ENCODE measurements at regions of chr1 and their contacts with region 1.

Region 1: GRCh38 chr1:9428601-9429341 is 110.5 kb upstream of the SLC25A33 start:
- DNase-seq: peak; percentile 100
- ATAC-seq: peak; percentile 74
- H3K4me3 ChIP-seq: peak overlapping the region; percentile 58 to 91 (median 77)
- H3K4me3 Mint-ChIP-seq: peak overlapping the region; percentile 99
- H3K27ac ChIP-seq: peak overlapping the region; percentile 74 to 85
- H3K27ac Mint-ChIP-seq: peak overlapping the region; percentile 98
- H3K4me1 ChIP-seq: peaks cover 48 to 56% of the 10 kb centered on the region in 2 donors
- H3K4me1 Mint-ChIP-seq: peaks cover 54% of the 10 kb centered on the region
- H3K27me3 ChIP-seq: no peaks in the 10 kb centered on the region
- H3K27me3 Mint-ChIP-seq: no peaks in the 10 kb centered on the region
- CTCF ChIP-seq: peak; percentile 19

Region 2: GRCh38 chr1:9350013-9350908 is 78.5 kb before region 1 on chr1:
- CTCF ChIA-PET with region 1: no interaction called
- POLR2A ChIA-PET with region 1: no interaction called
- intact Hi-C with region 1: no loop called
- DNase-seq: no peak
- ATAC-seq: no peak
- H3K4me3 ChIP-seq: no peak overlapping the region
- H3K4me3 Mint-ChIP-seq: no peak overlapping the region
- H3K27ac ChIP-seq: no peak overlapping the region
- H3K27ac Mint-ChIP-seq: no peak overlapping the region
- H3K4me1 ChIP-seq: no peaks in the 10 kb centered on the region
- H3K4me1 Mint-ChIP-seq: peaks cover 11% of the 10 kb centered on the region
- H3K27me3 ChIP-seq: no peaks in the 10 kb centered on the region
- H3K27me3 Mint-ChIP-seq: no peaks in the 10 kb centered on the region
- CTCF ChIP-seq: no peak

Region 3: DNA sequence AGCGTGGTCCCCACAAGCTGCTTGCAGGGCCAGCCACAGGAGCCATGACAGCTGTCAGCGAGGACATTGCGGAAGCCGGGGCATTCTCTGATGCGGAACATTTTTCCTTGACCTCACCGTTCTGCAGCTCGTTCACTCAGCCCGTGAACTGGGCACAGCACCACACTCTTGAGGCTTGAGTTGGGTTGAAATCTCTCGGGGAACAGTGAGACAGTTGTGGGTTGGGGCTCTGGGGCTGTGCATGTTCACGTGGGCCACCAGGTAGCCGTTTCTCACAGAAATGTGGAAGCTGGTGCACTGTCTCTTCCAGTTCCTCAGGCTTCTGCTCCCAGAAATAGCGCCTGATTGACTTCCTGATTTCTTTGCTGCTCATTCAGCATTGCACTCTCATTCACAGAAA is 66.3 kb before region 1 on chr1:
- CTCF ChIA-PET with region 1: interaction called, 3 read pairs
- POLR2A ChIA-PET with region 1: no interaction called
- intact Hi-C with region 1: loop called (anchors 1 kb)
- DNase-seq: peak; percentile 58
- ATAC-seq: peak; percentile 56
- H3K4me3 ChIP-seq: peak overlapping the region in 2 of 5 experiments; percentile 6 to 23
- H3K4me3 Mint-ChIP-seq: peak overlapping the region; percentile 80
- H3K27ac ChIP-seq: no peak overlapping the region
- H3K27ac Mint-ChIP-seq: peak overlapping the region; percentile 59
- H3K4me1 ChIP-seq: peaks cover 21 to 26% of the 10 kb centered on the region in 2 donors
- H3K4me1 Mint-ChIP-seq: peaks cover 20% of the 10 kb centered on the region
- H3K27me3 ChIP-seq: no peaks in the 10 kb centered on the region
- H3K27me3 Mint-ChIP-seq: no peaks in the 10 kb centered on the region
- CTCF ChIP-seq: no peak

Region 4: DNA sequence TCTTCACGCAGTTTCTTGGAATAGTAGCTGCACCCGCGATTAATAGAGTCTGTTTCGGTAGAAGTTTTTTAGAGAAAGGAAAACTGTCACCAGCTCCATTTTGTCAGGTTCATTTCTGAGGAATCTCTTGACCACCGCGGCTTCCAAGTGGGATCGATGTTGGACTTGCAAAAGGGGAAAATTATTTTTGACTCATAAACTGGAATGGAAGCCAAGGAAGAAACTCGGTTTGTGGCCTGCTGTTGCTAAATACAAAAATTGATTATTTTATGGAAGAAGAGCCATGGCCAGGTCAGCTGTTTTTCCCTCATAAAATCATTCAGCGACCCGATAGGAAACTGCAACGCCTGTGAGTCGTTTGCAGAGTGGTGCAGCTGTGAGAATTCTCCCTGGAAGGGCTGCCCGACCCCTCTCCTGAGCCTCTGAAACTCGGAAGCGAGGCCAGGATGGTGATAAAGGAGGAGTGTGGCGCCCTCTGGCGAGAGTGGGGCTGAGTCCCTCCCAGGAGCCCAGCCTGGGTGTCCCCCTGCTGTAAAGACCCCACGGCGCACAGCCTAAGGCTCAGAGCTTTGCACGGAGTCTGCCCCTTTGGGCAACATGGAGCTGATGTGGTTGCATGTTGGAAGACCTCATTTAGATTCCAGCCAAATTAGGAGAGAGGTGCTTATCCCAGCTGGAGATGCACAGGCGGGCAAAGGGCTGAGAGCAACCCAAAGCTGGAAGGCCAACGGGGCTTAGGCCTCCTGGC is 26.9 kb after region 1 on chr1:
- CTCF ChIA-PET with region 1: interaction called, 20 read pairs
- POLR2A ChIA-PET with region 1: no interaction called
- intact Hi-C with region 1: no loop called
- DNase-seq: peak; percentile 80
- ATAC-seq: peak; percentile 77
- H3K4me3 ChIP-seq: no peak overlapping the region
- H3K4me3 Mint-ChIP-seq: no peak overlapping the region
- H3K27ac ChIP-seq: no peak overlapping the region
- H3K27ac Mint-ChIP-seq: no peak overlapping the region
- H3K4me1 ChIP-seq: peaks cover 0 to 3% of the 10 kb centered on the region in 2 donors
- H3K4me1 Mint-ChIP-seq: peaks cover 3% of the 10 kb centered on the region
- H3K27me3 ChIP-seq: no peaks in the 10 kb centered on the region
- H3K27me3 Mint-ChIP-seq: no peaks in the 10 kb centered on the region
- CTCF ChIP-seq: peak; percentile 92

Region 5: DNA sequence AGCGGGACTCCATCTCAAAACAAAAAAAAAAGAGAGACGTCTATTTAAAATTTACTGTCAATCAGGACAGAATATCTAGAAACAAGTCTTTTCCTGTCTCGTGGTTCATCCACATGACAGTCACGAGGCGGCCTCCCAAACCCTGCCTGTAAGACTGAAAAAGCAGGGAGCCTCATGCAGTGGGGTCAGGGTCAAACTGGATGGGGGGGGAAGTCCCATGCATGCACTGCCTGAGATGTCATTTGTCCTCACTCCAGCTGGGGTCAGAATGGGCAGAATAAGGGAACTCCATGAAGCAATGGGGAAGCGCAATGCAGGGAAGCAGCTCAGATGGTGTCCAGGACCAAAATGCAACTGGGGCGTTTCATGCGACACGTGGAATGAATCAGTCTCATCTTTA is 308.3 kb after region 1 on chr1:
- CTCF ChIA-PET with region 1: no interaction called
- POLR2A ChIA-PET with region 1: no interaction called
- intact Hi-C with region 1: no loop called
- DNase-seq: no peak
- ATAC-seq: no peak
- H3K4me3 ChIP-seq: no peak overlapping the region
- H3K4me3 Mint-ChIP-seq: no peak overlapping the region
- H3K27ac ChIP-seq: no peak overlapping the region
- H3K27ac Mint-ChIP-seq: peak overlapping the region; percentile 32
- H3K4me1 ChIP-seq: peaks cover 11 to 18% of the 10 kb centered on the region in 2 donors
- H3K4me1 Mint-ChIP-seq: peaks cover 20% of the 10 kb centered on the region
- H3K27me3 ChIP-seq: no peaks in the 10 kb centered on the region
- H3K27me3 Mint-ChIP-seq: no peaks in the 10 kb centered on the region
- CTCF ChIP-seq: no peak

Region 6: DNA sequence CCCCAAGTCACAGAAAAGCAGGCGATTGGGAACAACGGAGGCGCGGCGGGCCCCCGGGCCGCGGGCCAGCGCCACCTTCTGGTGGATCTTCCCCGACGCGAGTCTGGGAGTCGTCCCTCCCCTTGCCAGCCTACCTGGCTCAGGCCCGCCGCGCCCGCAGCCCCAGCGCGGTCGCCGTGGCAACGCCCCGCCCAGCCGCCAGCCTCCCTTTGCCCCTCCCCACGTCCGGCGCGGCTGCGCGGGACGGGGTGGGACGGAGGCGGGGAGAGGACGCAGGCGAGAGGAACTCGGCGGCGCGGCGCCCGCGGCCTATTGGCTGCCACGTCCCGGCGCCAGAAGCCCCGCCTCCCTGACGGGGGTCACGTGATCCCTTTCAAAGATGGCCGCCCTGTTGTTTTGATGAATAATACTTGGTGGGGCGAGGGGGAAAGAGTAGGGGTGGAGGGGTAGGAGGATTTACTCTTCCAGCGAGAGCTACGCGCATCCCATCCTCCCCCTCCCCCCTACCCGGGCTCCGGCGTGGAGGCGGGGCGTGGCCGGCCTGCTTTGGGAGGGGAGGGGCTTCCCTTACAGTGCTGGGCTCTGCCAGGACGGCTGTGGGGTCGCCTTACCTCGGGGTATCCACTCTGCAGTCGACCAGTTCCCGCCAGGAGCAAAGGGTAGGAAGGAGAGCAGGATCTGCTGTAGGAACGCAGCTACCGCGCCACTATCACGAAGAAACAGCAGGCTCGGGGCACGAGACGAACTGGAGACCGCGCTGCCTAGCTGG is 604.0 kb after region 1 on chr1 and contains the start of gene UBE4B:
- CTCF ChIA-PET with region 1: no interaction called
- POLR2A ChIA-PET with region 1: no interaction called
- intact Hi-C with region 1: loop called (anchors 2 kb)
- DNase-seq: peak; percentile 99
- ATAC-seq: peak; percentile 94
- H3K4me3 ChIP-seq: peak within 1 kb of the TSS; percentile 70 to 93 (median 89)
- H3K4me3 Mint-ChIP-seq: peak within 1 kb of the TSS; percentile 99
- H3K27ac ChIP-seq: peak within 1 kb of the TSS; percentile 73 to 84
- H3K27ac Mint-ChIP-seq: peak within 1 kb of the TSS; percentile 96
- H3K4me1 ChIP-seq: peaks cover 18 to 19% of the 10 kb centered on the region in 2 donors
- H3K4me1 Mint-ChIP-seq: peaks cover 23% of the 10 kb centered on the region
- H3K27me3 ChIP-seq: no peaks in the 10 kb centered on the region
- H3K27me3 Mint-ChIP-seq: no peaks in the 10 kb centered on the region
- CTCF ChIP-seq: peak; percentile 89
- total RNA-seq, gene UBE4B: 57.5 and 59.0 TPM in 2 replicates